PC-3 (cell line): ENCODE measurements at regions of chr11 and their contacts with region 1.

Region 1: GRCh38 chr11:123407130-123407995 is 22.7 kb upstream of the GRAMD1B start:
- DNase-seq: peak; percentile 95
- ATAC-seq: peak; percentile 96
- H3K4me3 ChIP-seq: peak overlapping the region; percentile 22; the same call in 1 of the 2 replicates
- H3K27ac ChIP-seq: peak overlapping the region; percentile 42
- H3K4me1 ChIP-seq: peaks cover 19% of the 10 kb centered on the region
- H3K27me3 ChIP-seq: no peaks in the 10 kb centered on the region
- CTCF ChIP-seq: peak; percentile 98

Region 2: GRCh38 chr11:123286761-123287160 is 120.6 kb before region 1 on chr11:
- CTCF ChIA-PET with region 1: no interaction called
- POLR2A ChIA-PET with region 1: interaction called, 11 read pairs
- intact Hi-C with region 1: no loop called
- DNase-seq: no peak
- ATAC-seq: no peak
- H3K4me3 ChIP-seq: no peak overlapping the region
- H3K27ac ChIP-seq: no peak overlapping the region
- H3K4me1 ChIP-seq: no peaks in the 10 kb centered on the region
- H3K27me3 ChIP-seq: peaks cover 32% of the 10 kb centered on the region
- CTCF ChIP-seq: no peak

Region 3: GRCh38 chr11:123301696-123302400 is 105.5 kb before region 1 on chr11:
- CTCF ChIA-PET with region 1: no interaction called
- POLR2A ChIA-PET with region 1: no interaction called
- intact Hi-C with region 1: loop called (anchors 1 kb)
- DNase-seq: peak; percentile 72
- ATAC-seq: peak; percentile 79
- H3K4me3 ChIP-seq: peak overlapping the region; percentile 55
- H3K27ac ChIP-seq: no peak overlapping the region; the same call in 1 of the 2 replicates
- H3K4me1 ChIP-seq: peaks cover 29% of the 10 kb centered on the region
- H3K27me3 ChIP-seq: no peaks in the 10 kb centered on the region
- CTCF ChIP-seq: peak; percentile 95

Region 4: DNA sequence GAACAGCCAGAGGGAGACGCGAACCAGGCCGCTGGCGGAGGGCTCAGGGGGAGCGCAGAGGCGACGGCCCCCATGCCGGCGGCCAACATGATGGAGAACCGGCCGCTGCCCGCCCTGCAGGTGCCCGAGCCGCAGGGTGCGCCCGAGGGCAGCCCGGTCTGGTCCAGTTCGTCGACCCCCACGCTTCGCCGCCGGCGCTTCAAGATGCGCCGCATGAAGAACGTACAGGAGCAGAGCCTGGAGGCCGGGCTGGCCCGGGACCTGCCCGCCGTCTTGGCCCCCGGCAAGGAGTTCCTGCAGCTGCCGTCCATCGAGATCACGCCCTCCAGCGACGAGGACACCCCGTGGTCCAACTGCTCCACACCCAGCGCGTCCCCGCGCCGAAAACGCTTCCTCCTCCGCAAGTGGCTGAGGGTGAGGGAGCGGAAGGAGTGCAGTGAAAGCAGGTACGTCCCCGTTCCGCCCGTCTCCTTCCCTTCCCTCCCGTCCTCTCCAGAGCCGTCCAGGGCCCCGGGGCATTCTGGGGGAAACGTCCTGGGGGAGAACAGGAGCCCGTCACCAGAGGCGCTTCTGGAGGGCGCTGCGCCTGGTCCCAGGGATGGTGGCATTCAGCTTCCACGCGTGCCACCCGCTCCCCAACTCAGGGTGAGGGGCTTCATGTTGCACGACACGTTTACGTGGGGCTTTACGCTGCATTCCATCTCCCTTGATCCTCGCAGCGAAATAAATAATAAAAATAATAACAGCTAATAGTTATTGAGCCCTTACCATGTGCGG is 23.5 kb after region 1 on chr11:
- CTCF ChIA-PET with region 1: interaction called, 18 read pairs
- POLR2A ChIA-PET with region 1: interaction called, 4 read pairs
- intact Hi-C with region 1: loop called (anchors 1 kb)
- DNase-seq: peak; percentile 72
- ATAC-seq: peak; percentile 36
- H3K4me3 ChIP-seq: peak overlapping the region; percentile 88
- H3K27ac ChIP-seq: peak overlapping the region; percentile 91
- H3K4me1 ChIP-seq: peaks cover 48% of the 10 kb centered on the region
- H3K27me3 ChIP-seq: no peaks in the 10 kb centered on the region
- CTCF ChIP-seq: no peak; the same call in 1 of the 2 replicates

Region 5: GRCh38 chr11:123454060-123454651 is 46.8 kb after region 1 on chr11:
- CTCF ChIA-PET with region 1: interaction called, 8 read pairs
- POLR2A ChIA-PET with region 1: no interaction called
- intact Hi-C with region 1: loop called (anchors 2 kb)
- DNase-seq: peak; percentile 99
- ATAC-seq: peak; percentile 80
- H3K4me3 ChIP-seq: peak overlapping the region; percentile 47
- H3K27ac ChIP-seq: peak overlapping the region; percentile 98
- H3K4me1 ChIP-seq: peaks cover 73% of the 10 kb centered on the region
- H3K27me3 ChIP-seq: no peaks in the 10 kb centered on the region
- CTCF ChIP-seq: no peak

Region 6: GRCh38 chr11:123478352-123478987 is 71.1 kb after region 1 on chr11:
- CTCF ChIA-PET with region 1: interaction called, 67 read pairs
- POLR2A ChIA-PET with region 1: no interaction called
- intact Hi-C with region 1: loop called (anchors 1 kb)
- DNase-seq: peak; percentile 89
- ATAC-seq: peak; percentile 29
- H3K4me3 ChIP-seq: no peak overlapping the region
- H3K27ac ChIP-seq: peak overlapping the region; percentile 66
- H3K4me1 ChIP-seq: peaks cover 42% of the 10 kb centered on the region
- H3K27me3 ChIP-seq: no peaks in the 10 kb centered on the region
- CTCF ChIP-seq: peak; percentile 95

Region 7: DNA sequence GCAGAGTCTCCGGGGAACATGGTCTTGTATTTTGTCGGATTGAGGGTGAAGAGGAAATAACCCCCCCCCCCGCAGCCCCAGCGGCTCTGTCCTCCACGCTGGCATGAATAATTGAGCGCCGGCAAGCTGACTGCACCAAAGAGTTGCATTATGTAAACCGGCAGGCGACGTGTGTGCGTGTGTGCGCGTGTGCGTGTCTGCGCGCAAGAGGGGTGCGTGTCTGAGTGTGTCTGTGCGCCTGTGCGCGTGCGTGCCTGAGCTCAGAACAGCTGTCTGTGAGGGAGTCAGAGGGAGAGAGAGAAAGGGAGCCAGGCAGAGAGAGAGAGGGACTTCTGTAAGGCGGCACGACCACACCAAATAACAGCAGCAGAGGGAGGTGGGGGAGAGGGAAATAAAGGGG is 152.6 kb after region 1 on chr11:
- CTCF ChIA-PET with region 1: no interaction called
- POLR2A ChIA-PET with region 1: no interaction called
- intact Hi-C with region 1: loop called (anchors 10 kb)
- DNase-seq: no peak
- ATAC-seq: no peak
- H3K4me3 ChIP-seq: no peak overlapping the region
- H3K27ac ChIP-seq: no peak overlapping the region
- H3K4me1 ChIP-seq: no peaks in the 10 kb centered on the region; the same call in 1 of the 2 replicates
- H3K27me3 ChIP-seq: no peaks in the 10 kb centered on the region
- CTCF ChIP-seq: no peak